ENCODE measurements at regions of chr2 and their contacts with region 1.

Region 1: GRCh38 chr2:43024515-43025011 is 201.8 kb downstream of the ZFP36L2 start:
- DNase-seq: peak; percentile 64
- H3K4me3 ChIP-seq: no peak overlapping the region
- H3K27ac ChIP-seq: no peak overlapping the region
- H3K4me1 ChIP-seq: no peaks in the 10 kb centered on the region
- H3K27me3 ChIP-seq: no peaks in the 10 kb centered on the region
- CTCF ChIP-seq: peak; percentile 71 to 94
- POLR2A ChIP-seq: no peak

Region 2: DNA sequence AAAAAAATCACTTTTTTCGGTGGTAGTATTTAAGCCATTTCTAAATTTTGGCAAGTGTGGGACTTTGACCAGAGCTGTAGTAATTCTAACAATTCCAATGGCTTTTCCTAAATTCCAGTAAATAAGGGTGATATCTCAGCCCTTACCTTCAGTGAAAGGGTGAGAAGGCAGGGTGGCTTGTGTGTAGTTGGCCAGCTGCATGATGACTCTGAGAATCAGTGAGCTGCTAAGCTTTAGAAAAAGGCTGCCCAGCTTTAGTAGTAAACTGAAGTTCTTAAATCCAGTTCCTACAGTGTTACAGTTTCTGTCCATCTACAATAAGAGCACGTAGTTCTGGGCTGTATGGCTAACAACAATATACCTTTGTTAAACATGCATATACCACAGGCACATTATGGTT is 302.7 kb before region 1 on chr2:
- CTCF ChIA-PET with region 1: no interaction called
- POLR2A ChIA-PET with region 1: no interaction called
- dilution Hi-C with region 1: no loop called
- intact Hi-C with region 1: no loop called
- DNase-seq: no peak
- H3K4me3 ChIP-seq: no peak overlapping the region
- H3K27ac ChIP-seq: no peak overlapping the region
- H3K4me1 ChIP-seq: no peaks in the 10 kb centered on the region
- H3K27me3 ChIP-seq: no peaks in the 10 kb centered on the region
- CTCF ChIP-seq: no peak
- POLR2A ChIP-seq: no peak

Region 3: DNA sequence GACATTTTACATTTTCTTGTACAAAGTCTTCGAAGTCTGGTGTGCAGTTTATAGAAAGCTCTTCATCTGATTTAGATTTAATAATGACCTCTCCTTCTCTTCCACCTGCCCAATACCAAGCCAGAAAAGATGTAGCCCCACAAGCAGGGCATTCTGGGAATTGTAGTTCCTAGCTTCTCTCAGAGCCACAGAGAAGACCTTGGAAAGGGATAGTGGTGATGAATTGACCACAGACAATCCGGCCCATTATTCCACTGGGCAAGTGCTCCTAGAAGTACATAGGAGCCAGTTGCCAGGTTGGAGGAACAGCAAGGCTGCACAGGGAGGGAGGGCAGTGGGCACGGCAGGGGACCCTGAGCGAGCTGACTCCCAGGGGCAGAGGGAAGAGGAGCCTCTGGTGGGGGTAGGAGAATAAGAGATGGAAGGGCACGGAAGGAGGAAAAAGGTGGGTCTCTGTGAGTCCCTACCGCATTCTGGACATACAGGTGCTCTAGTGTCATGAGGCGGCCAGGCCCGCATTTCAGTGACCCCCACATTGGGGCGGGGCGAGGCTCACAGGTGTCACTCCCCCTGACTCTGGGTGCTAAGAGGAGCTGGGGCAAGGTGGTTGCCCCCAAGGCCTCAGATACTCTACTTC is 79.7 kb before region 1 on chr2:
- CTCF ChIA-PET with region 1: interaction called, 7 read pairs
- POLR2A ChIA-PET with region 1: no interaction called
- dilution Hi-C with region 1: no loop called
- intact Hi-C with region 1: loop called (anchors 2 kb)
- DNase-seq: no peak
- H3K4me3 ChIP-seq: no peak overlapping the region
- H3K27ac ChIP-seq: no peak overlapping the region
- H3K4me1 ChIP-seq: no peaks in the 10 kb centered on the region
- H3K27me3 ChIP-seq: no peaks in the 10 kb centered on the region
- CTCF ChIP-seq: no peak
- POLR2A ChIP-seq: no peak

Region 4: DNA sequence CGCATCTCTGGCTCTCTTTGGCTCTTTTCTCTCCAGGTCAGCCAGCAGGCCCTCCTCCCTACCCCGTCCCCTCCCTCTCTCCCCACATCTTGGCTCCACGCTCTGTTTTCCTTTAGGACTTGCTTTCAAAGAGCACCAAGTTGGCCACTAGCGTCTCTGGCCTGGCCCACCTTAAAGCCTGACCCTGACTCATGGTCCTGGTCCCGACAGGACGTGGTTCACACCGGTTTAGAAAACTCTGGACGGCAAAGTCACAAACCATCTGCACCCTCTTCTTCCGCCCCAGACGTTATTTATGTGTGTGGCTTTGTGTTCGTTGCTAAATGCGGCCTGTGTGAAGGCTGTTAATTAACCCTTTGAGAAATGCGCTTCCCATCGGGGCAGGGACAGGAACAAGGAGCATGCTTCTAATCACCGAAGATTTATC is 63.2 kb before region 1 on chr2:
- CTCF ChIA-PET with region 1: no interaction called
- POLR2A ChIA-PET with region 1: no interaction called
- dilution Hi-C with region 1: no loop called
- intact Hi-C with region 1: no loop called
- DNase-seq: peak; percentile 95
- H3K4me3 ChIP-seq: no peak overlapping the region
- H3K27ac ChIP-seq: peak overlapping the region; percentile 81
- H3K4me1 ChIP-seq: peaks cover 24% of the 10 kb centered on the region
- H3K27me3 ChIP-seq: no peaks in the 10 kb centered on the region
- CTCF ChIP-seq: no peak
- POLR2A ChIP-seq: no peak

Region 5: GRCh38 chr2:43010438-43011157 is 14.0 kb before region 1 on chr2:
- CTCF ChIA-PET with region 1: interaction called, 16 read pairs
- POLR2A ChIA-PET with region 1: no interaction called
- dilution Hi-C with region 1: no loop called
- intact Hi-C with region 1: no loop called
- DNase-seq: no peak
- H3K4me3 ChIP-seq: no peak overlapping the region
- H3K27ac ChIP-seq: no peak overlapping the region
- H3K4me1 ChIP-seq: no peaks in the 10 kb centered on the region
- H3K27me3 ChIP-seq: peaks cover 6 to 7% of the 10 kb centered on the region in 2 experiments
- CTCF ChIP-seq: no peak
- POLR2A ChIP-seq: no peak

Region 6: GRCh38 chr2:43105586-43106558 is 81.3 kb after region 1 on chr2:
- CTCF ChIA-PET with region 1: interaction called, 22 read pairs
- POLR2A ChIA-PET with region 1: no interaction called
- dilution Hi-C with region 1: no loop called
- intact Hi-C with region 1: no loop called
- DNase-seq: no peak
- H3K4me3 ChIP-seq: no peak overlapping the region
- H3K27ac ChIP-seq: no peak overlapping the region
- H3K4me1 ChIP-seq: peaks cover 4% of the 10 kb centered on the region
- H3K27me3 ChIP-seq: no peaks in the 10 kb centered on the region
- CTCF ChIP-seq: peak in 1 of 2 donors; percentile 38
- POLR2A ChIP-seq: no peak

Region 7: DNA sequence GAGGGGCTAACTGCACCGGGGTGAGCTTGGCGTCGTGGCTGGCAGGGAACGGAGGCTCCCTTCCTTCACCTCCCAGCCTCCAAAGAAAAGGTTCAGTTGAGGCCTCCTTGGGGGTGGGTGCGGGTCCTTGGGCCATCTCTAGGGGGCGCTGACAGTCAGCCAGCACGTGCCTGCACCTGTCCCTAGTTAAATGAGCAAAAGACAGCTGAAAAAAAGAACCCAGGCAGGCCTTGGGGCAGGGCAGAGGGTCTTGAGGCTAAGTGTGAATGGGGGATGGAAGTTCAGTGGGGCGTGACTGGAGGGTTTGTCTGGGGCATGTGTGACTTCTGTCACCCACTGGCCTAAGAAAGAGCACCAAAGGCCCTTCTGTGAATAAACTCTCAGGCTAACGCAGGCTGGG is 145.4 kb after region 1 on chr2:
- CTCF ChIA-PET with region 1: interaction called, 13 read pairs
- POLR2A ChIA-PET with region 1: interaction called, 3 read pairs
- dilution Hi-C with region 1: no loop called
- intact Hi-C with region 1: loop called (anchors 2 kb)
- DNase-seq: peak; percentile 59
- H3K4me3 ChIP-seq: no peak overlapping the region
- H3K27ac ChIP-seq: peak overlapping the region; percentile 88
- H3K4me1 ChIP-seq: peaks cover 47% of the 10 kb centered on the region
- H3K27me3 ChIP-seq: no peaks in the 10 kb centered on the region
- CTCF ChIP-seq: peak; percentile 76 to 78
- POLR2A ChIP-seq: no peak

Region 8: DNA sequence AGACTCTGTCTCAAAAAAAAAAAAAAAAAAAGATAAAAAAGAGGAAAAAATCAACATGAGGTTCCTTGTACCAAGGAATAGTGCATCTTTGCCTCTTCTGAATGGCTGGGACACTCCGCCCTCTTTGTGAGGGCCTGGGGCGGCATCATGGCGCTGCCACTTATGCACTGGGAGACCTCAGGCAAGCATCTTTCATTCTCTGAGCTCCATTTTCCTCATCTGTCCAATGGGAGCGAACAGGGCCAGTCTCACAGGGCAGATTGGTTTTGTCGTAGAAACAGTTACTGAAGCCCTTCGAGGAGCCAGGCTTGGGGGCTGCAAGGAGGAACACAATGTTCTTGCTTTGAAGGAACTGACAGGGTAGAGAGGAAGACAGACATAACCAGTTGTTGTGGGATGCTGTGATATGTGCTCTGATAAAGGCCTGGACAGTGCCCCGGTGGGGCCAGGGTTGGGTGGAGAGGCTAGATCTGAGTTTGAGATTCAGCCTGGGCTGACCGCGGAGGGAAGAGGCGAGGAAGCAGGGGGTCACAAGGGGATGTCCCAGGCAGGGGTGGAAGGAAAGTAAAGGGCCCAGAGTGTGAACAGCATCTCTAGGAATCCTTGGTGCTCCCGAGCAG is 187.8 kb after region 1 on chr2:
- CTCF ChIA-PET with region 1: no interaction called
- POLR2A ChIA-PET with region 1: no interaction called
- dilution Hi-C with region 1: no loop called
- intact Hi-C with region 1: no loop called
- DNase-seq: no peak
- H3K4me3 ChIP-seq: no peak overlapping the region
- H3K27ac ChIP-seq: no peak overlapping the region
- H3K4me1 ChIP-seq: no peaks in the 10 kb centered on the region
- H3K27me3 ChIP-seq: no peaks in the 10 kb centered on the region
- CTCF ChIP-seq: no peak
- POLR2A ChIP-seq: no peak

Region 9: DNA sequence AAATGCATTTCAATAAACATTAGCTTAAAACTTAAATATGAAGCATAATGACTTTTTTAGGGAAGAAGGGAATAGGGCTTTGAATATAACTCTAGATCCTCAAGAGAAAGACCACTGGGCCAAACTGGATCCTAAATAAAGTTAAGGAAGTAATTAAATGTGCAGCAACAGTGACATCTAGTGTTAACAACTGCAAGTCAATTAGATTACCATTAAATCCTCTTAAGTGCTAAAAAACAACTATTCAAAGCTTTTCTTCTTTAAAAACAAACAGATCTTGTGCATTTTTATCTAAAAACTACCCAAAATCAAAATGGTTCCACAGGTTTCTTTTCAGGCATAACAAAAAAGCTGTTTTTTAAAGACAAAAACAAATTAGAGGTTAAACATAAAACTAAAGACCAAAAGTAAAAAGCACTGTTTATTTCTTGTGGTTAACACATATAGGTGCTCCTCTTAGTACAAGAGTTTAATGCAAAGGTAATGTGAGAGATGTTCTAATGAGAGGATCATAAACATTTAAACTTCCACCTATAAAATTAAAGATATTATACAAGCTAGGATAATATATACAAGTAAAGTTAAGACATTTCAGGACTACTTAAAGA is 459.9 kb after region 1 on chr2:
- CTCF ChIA-PET with region 1: interaction called, 6 read pairs
- POLR2A ChIA-PET with region 1: no interaction called
- dilution Hi-C with region 1: no loop called
- intact Hi-C with region 1: loop called (anchors 1 kb)
- DNase-seq: peak; percentile 84
- H3K4me3 ChIP-seq: no peak overlapping the region
- H3K27ac ChIP-seq: no peak overlapping the region
- H3K4me1 ChIP-seq: peaks cover 7% of the 10 kb centered on the region
- H3K27me3 ChIP-seq: no peaks in the 10 kb centered on the region
- CTCF ChIP-seq: peak; percentile 31 to 32
- POLR2A ChIP-seq: no peak